A549 (cell line): ENCODE measurements at regions of chr10 and their contacts with region 1.

Region 1: DNA sequence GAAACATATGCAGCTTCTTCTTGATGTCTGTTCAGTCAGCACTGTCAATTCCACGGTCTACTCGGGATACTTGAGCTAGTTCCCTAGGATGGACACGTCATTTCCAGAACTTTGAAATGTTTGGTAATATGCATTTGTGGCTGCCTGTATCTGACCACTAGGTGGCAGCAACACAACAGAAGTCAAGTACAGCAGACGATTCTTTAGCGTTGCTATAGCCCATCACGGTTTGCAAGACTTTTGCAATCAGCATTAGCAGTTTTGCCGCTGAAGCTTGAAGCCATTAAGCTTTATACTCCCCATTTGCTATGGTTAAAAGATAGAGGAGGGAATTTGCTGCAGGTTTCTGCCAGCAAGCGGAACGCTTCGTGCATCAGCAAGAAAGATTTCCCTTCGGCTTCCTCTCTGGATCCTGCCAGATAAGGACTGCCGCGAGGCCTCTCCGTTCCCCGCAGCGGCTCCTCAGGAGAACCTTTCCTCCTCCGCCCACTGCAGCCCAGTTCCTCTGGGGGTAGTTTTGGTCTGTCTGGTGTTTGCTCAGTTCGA is 63.5 kb downstream of the ABCC2 start:
- DNase-seq: peak; percentile 60 to 92
- ATAC-seq: peak; percentile 72 to 78
- H3K4me3 ChIP-seq: no peak overlapping the region
- H3K27ac ChIP-seq: peak overlapping the region in 1 of 2 experiments; percentile 31; a peak in 2 of 6 replicates
- H3K4me1 ChIP-seq: peaks cover 56% of the 10 kb centered on the region
- CTCF ChIP-seq: peak; percentile 92
- EP300 ChIP-seq: no peak
- POLR2A ChIP-seq: no peak
- RAD21 ChIP-seq: peak; percentile 81 to 82

Region 2: GRCh38 chr10:99595770-99596465 is 250.0 kb before region 1 on chr10:
- CTCF ChIA-PET with region 1: no interaction called
- POLR2A ChIA-PET with region 1: no interaction called
- DNase-seq: peak in 1 of 2 experiments; percentile 52
- ATAC-seq: peak; percentile 58 to 63; a peak in 3 of 6 replicates
- H3K4me3 ChIP-seq: no peak overlapping the region
- H3K27ac ChIP-seq: peak overlapping the region in 1 of 2 experiments; percentile 18; a peak in 1 of 6 replicates
- H3K4me1 ChIP-seq: peaks cover 16% of the 10 kb centered on the region
- CTCF ChIP-seq: no peak
- EP300 ChIP-seq: no peak
- POLR2A ChIP-seq: no peak
- RAD21 ChIP-seq: no peak

Region 3: DNA sequence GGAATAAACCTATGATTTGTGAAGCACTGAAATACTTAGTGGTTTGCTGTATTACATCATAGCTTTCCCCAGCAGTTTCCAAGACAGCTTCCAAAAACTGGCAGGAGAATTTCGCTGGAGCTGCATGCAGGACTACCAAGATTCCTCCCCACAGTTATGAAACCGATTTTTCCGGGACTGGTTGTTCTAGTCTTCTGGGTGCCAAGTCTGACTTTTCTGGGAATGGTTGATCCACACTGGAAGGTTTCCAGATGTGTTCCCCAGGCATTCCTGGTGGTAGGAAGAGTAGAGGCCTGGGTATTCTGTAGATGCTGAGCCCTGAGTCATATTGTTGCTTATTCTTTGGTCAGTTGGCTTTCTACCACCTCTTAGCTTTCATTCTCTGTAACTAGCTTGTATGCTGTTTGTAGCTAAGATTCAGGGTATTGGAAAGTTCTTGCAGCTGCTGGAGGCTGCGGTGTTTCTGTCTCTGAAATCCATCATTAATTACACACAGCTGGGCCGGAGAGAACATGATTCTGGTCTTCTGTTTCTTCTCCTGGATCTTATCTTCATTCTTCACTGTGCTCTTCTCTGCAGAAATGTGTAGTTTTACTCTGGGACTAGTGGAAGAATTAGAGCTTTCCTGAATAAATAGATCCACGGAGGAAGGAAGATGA is 57.2 kb before region 1 on chr10:
- CTCF ChIA-PET with region 1: interaction called, 12 read pairs
- POLR2A ChIA-PET with region 1: no interaction called
- DNase-seq: no peak
- ATAC-seq: peak in 1 of 2 experiments; percentile 16; a peak in 2 of 6 replicates
- H3K4me3 ChIP-seq: peak overlapping the region; percentile 34
- H3K27ac ChIP-seq: peak overlapping the region; percentile 98 to 100
- H3K4me1 ChIP-seq: peaks cover 87% of the 10 kb centered on the region
- CTCF ChIP-seq: no peak
- EP300 ChIP-seq: no peak
- POLR2A ChIP-seq: no peak
- RAD21 ChIP-seq: no peak

Region 4: DNA sequence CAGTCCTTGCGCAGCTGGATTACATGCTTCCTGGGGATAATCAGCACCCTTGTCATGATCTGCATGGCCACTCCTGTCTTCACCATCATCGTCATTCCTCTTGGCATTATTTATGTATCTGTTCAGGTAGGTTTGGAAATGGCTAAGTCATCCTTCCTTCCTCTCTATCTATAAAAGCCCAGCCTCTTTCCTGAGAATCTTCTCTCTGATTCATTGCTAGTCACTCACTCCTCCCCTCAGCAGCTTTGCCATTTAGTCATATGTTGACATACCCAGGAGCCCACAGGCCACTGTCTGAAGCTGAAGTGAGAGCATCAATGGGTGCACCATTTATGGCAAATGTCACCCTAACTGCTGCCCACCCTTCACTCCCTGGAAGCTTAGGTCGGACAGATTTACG is 11.5 kb before region 1 on chr10:
- CTCF ChIA-PET with region 1: interaction called, 47 read pairs
- POLR2A ChIA-PET with region 1: no interaction called
- DNase-seq: peak; percentile 89 to 92
- ATAC-seq: peak; percentile 91 to 93
- H3K4me3 ChIP-seq: no peak overlapping the region
- H3K27ac ChIP-seq: peak overlapping the region; percentile 71 to 78
- H3K4me1 ChIP-seq: peaks cover 67% of the 10 kb centered on the region
- CTCF ChIP-seq: no peak
- EP300 ChIP-seq: no peak
- POLR2A ChIP-seq: no peak
- RAD21 ChIP-seq: no peak

Region 5: DNA sequence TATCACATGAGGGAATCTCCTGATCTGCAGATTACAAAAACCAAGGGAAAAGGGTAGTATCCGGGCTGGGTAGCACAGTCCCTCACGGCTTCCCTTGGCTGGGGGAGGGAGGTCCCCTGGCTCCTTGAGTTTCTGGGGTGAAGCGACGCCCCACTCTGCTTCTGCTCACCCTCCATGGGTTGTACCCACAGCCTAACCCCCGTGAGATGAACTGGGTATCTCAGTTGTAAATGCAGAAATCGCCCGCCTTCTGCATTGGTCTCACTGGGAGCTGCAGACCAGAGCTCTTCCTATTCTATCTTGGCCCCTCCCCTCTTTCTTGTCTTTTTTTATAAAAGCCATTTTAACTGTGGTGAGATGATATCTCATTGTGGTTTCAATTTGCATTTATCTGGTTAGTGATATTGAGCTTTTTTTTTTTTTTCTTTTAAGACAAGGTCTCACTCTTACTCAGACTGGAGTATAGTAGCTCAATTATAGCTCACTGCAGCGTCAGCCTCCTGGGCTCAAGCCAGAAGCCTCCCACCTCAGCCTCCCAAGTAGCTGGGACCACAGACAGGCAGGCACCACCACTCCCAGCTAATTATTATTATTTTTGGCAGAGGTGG is 24.3 kb after region 1 on chr10:
- CTCF ChIA-PET with region 1: interaction called, 30 read pairs
- POLR2A ChIA-PET with region 1: no interaction called
- DNase-seq: no peak
- ATAC-seq: peak in 1 of 2 experiments; percentile 8; a peak in 2 of 6 replicates
- H3K4me3 ChIP-seq: no peak overlapping the region
- H3K27ac ChIP-seq: no peak overlapping the region
- H3K4me1 ChIP-seq: no peaks in the 10 kb centered on the region
- CTCF ChIP-seq: no peak
- EP300 ChIP-seq: no peak
- POLR2A ChIP-seq: no peak
- RAD21 ChIP-seq: no peak

Region 6: GRCh38 chr10:99895867-99896266 is 50.0 kb after region 1 on chr10:
- CTCF ChIA-PET with region 1: interaction called, 12 read pairs
- POLR2A ChIA-PET with region 1: no interaction called
- DNase-seq: no peak
- ATAC-seq: no peak
- H3K4me3 ChIP-seq: no peak overlapping the region
- H3K27ac ChIP-seq: no peak overlapping the region
- H3K4me1 ChIP-seq: no peaks in the 10 kb centered on the region
- CTCF ChIP-seq: no peak
- EP300 ChIP-seq: no peak
- POLR2A ChIP-seq: no peak
- RAD21 ChIP-seq: no peak

Region 7: GRCh38 chr10:100020142-100020885 is 174.4 kb after region 1 on chr10:
- CTCF ChIA-PET with region 1: interaction called, 14 read pairs
- POLR2A ChIA-PET with region 1: no interaction called
- DNase-seq: peak; percentile 46 to 86
- ATAC-seq: peak; percentile 78 to 82
- H3K4me3 ChIP-seq: 0 out of 3 replicates have a peak overlapping the region, but pooled peaks have one; percentile 14
- H3K27ac ChIP-seq: peak overlapping the region; percentile 80 to 93
- H3K4me1 ChIP-seq: peaks cover 53% of the 10 kb centered on the region
- CTCF ChIP-seq: no peak
- EP300 ChIP-seq: peak; percentile 22 to 42; a peak in 2 of 5 replicates
- POLR2A ChIP-seq: no peak
- RAD21 ChIP-seq: peak in 1 of 2 experiments; percentile 16; a peak in 1 of 5 replicates